Spleen (tissue), 13 donors: ENCODE measurements at regions of chr13 and their contacts with region 1.

Region 1: DNA sequence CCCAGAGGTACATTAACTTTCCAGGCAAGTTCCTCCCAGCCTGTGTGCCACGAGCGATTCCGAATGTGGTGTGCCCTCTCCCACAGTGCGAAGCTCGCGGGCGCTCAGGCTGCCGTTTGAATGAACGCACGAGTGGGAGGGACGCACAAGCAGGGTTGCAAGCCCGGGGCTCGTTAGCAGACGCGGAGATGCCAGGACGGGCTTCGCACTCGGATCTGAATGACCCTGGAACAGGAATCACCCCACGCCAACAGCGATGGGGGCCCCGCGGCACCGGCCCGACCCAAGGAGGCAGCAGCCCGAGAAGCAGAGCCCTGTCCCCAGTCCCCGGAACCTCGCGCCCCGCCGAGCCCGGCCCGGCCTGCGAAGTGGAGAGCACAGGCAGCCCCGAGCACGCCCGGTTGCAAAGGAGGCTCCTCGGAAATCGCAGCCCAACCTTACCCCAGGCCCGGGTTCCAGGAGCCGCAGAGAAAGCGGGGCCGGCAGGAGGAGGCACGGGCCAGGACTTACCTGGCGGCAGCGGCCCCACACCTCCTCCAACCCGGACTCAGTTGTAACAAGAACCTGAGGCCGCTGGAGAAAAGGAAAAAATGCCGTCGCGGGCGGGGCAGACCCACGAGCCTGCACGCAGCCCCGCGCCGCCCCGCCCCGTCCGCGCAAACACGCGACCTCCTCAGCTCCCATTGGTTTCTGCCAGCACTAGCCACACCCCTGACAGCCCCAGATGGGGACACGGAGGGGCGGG is at the start of gene SLC25A30:
- DNase-seq: peak; percentile 98
- H3K4me3 ChIP-seq: peak within 1 kb of the TSS; percentile 69 to 95 (median 88)
- H3K27ac ChIP-seq: peak within 1 kb of the TSS; percentile 89 to 94 (median 92)
- H3K4me1 ChIP-seq: peaks cover 18 to 41% (median 33%) of the 10 kb centered on the region in 6 donors
- H3K27me3 ChIP-seq: no peaks in the 10 kb centered on the region
- CTCF ChIP-seq: no peak
- POLR2A ChIP-seq: peak in 1 of 3 donors; percentile 30
- total RNA-seq, gene SLC25A30: 16.6 to 31.9 (median 23.5) TPM

Region 2: GRCh38 chr13:45464687-45465453 is 46.9 kb after region 1 on chr13 and contains the start of gene COG3:
- intact Hi-C with region 1: loop called (anchors 10 kb)
- DNase-seq: peak; percentile 97
- H3K4me3 ChIP-seq: peak within 1 kb of the TSS; percentile 83 to 97 (median 94)
- H3K27ac ChIP-seq: peak within 1 kb of the TSS; percentile 87 to 97 (median 96)
- H3K4me1 ChIP-seq: peaks cover 28 to 61% (median 51%) of the 10 kb centered on the region in 6 donors
- H3K27me3 ChIP-seq: no peaks in the 10 kb centered on the region
- CTCF ChIP-seq: peak in 8 of 11 experiments; percentile 8 to 83 (median 52)
- POLR2A ChIP-seq: peak in 1 of 3 donors; percentile 28
- total RNA-seq, gene COG3: 29.2 to 99.2 (median 38.2) TPM